ENCODE measurements at regions of chr5 and their contacts with region 1.

Region 1: GRCh38 chr5:6712577-6713275 is 506 bp upstream of the TENT4A start:
- DNase-seq: peak; percentile 93 to 99 (median 96)
- ATAC-seq: peak; percentile 82
- H3K4me3 ChIP-seq: peak overlapping the region; percentile 83
- H3K27ac ChIP-seq: peak overlapping the region; percentile 94
- H3K4me1 ChIP-seq: peaks cover 29 to 35% of the 10 kb centered on the region in 2 experiments; a peak in 4 of 5 replicates
- H3K27me3 ChIP-seq: no peaks in the 10 kb centered on the region
- CTCF ChIP-seq: peak in 2 of 3 experiments; percentile 18 to 32; a peak in 2 of 6 replicates
- EP300 ChIP-seq: peak; percentile 14; the same call in 1 of the 2 replicates
- POLR2A ChIP-seq: peak; percentile 87
- RAD21 ChIP-seq: peak; percentile 18 to 31; a peak in 2 of 4 replicates

Region 2: DNA sequence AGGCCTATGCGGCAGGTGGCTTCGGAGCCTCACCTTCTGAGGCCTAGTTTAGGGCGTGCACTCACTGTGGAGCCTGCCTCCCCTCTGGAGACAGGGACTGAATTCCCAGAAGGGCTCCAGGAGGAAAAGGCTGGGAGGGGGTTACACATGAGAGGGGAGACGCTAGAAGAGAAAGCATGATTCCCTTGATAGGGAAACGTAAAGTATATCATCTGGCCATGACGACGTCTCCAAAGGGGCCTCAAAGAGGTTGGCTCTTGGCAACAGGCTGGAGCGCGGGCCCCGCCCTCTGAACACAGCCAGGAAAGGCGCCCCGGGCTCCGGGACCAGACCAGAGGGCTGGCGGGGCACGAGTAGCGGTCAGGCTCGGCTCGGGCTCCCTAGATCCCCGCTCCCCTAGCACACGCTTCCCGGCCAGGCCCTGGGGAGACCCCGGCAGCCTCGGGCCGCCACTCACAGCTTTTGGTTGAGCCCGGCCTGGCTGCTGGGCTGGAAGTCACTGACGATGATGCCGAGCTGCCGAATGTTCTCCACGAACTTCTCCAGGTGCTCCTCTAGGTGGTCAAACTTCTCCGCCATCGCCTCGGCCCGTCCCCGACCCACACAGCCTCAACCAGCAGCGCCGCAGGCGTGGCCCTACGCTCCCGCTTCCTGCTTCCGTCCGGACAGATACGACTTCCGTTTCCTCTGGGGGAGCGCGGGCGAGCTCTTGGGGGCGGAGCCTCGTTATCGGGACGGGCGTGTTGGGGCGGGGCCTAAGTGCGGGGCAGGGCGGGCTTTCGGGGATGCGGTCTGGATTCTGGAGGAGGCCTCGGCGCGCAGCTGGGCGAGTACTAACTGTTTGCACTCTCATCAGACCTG is 334.6 kb before region 1 on chr5 and contains the start of gene MED10:
- CTCF ChIA-PET with region 1: no interaction called
- POLR2A ChIA-PET with region 1: no interaction called
- in situ Hi-C with region 1: no loop called
- intact Hi-C with region 1: loop called (anchors 10 kb)
- DNase-seq: peak; percentile 97 to 98 (median 98)
- ATAC-seq: peak; percentile 99
- H3K4me3 ChIP-seq: peak within 1 kb of the TSS; percentile 92
- H3K27ac ChIP-seq: peak within 1 kb of the TSS; percentile 87
- H3K4me1 ChIP-seq: peaks cover 14 to 15% of the 10 kb centered on the region in 2 experiments; a peak in 4 of 5 replicates
- H3K27me3 ChIP-seq: no peaks in the 10 kb centered on the region; a peak in 1 of 5 replicates
- CTCF ChIP-seq: no peak
- EP300 ChIP-seq: no peak; the same call in 1 of the 2 replicates
- POLR2A ChIP-seq: peak; percentile 95
- RAD21 ChIP-seq: no peak
- polyA plus RNA-seq, gene MED10: 45.0 to 72.5 TPM

Region 3: DNA sequence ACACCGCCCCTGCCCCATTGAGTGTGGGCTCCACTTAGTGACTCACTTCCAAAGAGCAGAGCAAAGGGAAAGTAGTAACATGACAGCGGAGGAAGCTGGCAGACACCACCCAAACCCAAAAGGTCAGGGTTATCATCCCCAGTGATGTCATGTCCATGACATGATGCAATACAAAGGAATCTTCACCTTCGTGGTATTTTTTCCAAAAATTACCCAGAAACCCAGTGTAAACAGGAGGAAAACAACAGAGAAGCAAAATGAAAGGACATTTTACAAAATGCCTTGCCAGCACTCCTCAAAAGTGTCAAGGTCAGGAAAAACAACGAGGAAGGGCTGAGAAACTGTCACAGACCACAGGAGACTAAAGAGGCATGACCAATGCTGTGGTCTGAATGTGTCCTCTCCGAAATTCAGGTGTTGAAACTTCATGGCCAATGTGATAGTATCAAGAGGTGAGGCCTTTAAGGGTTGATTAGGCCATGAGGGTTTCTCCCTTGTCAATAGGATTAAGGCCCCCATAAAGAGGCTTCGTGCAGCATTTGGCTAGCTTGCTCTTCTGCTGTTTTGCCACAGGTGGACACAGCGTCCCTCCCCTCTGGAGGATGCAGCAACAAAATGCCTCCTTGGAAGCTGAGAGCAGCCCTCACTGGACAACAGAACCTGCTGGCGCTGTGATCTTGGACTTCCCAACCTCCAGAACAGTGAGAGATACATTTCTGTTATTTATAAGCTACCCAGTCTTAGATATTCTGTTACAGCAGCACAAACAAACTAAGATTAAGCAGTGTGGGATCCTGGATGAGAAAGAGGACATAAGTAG is 303.9 kb before region 1 on chr5:
- CTCF ChIA-PET with region 1: no interaction called
- POLR2A ChIA-PET with region 1: no interaction called
- in situ Hi-C with region 1: no loop called
- intact Hi-C with region 1: no loop called
- DNase-seq: peak in 3 of 4 experiments; percentile 25 to 58 (median 30)
- ATAC-seq: peak; percentile 75
- H3K4me3 ChIP-seq: no peak overlapping the region
- H3K27ac ChIP-seq: no peak overlapping the region; the same call in 2 of the 3 replicates
- H3K4me1 ChIP-seq: peaks cover 10 to 34% of the 10 kb centered on the region in 2 experiments
- H3K27me3 ChIP-seq: peaks cover 27 to 38% of the 10 kb centered on the region in 2 experiments
- CTCF ChIP-seq: no peak
- EP300 ChIP-seq: peak; percentile 78
- POLR2A ChIP-seq: no peak
- RAD21 ChIP-seq: no peak; a peak in 2 of 4 replicates

Region 4: GRCh38 chr5:6632917-6633468 is 79.7 kb before region 1 on chr5 and contains the starts of genes NSUN2 and SRD5A1:
- CTCF ChIA-PET with region 1: no interaction called
- POLR2A ChIA-PET with region 1: interaction called, 6 read pairs
- in situ Hi-C with region 1: loop called (anchors 5 kb)
- intact Hi-C with region 1: loop called (anchors 1 kb)
- DNase-seq: peak; percentile 95 to 100 (median 100)
- ATAC-seq: peak; percentile 93
- H3K4me3 ChIP-seq: peak within 1 kb of the TSS; percentile 81
- H3K27ac ChIP-seq: peak within 1 kb of the TSS; percentile 99
- H3K4me1 ChIP-seq: peaks cover 11 to 16% of the 10 kb centered on the region in 2 experiments; a peak in 4 of 5 replicates
- H3K27me3 ChIP-seq: no peaks in the 10 kb centered on the region
- CTCF ChIP-seq: peak in 1 of 3 experiments; percentile 6; a peak in 1 of 6 replicates
- EP300 ChIP-seq: 0 out of 2 replicates have a peak, but pooled peaks have one; percentile 9
- POLR2A ChIP-seq: peak; percentile 93
- RAD21 ChIP-seq: no peak
- polyA plus RNA-seq, gene NSUN2: 9.2 to 13.6 TPM
- polyA plus RNA-seq, gene SRD5A1: 1.3 to 1.8 TPM

Measured in K562 (cell line).